Activated CD4-positive, alpha-beta memory T cell treated with anti-CD3 and anti-CD28 coated beads for 36 hours (primary cell): ENCODE measurements at regions of chr4 and their contacts with region 1.

Region 1: DNA sequence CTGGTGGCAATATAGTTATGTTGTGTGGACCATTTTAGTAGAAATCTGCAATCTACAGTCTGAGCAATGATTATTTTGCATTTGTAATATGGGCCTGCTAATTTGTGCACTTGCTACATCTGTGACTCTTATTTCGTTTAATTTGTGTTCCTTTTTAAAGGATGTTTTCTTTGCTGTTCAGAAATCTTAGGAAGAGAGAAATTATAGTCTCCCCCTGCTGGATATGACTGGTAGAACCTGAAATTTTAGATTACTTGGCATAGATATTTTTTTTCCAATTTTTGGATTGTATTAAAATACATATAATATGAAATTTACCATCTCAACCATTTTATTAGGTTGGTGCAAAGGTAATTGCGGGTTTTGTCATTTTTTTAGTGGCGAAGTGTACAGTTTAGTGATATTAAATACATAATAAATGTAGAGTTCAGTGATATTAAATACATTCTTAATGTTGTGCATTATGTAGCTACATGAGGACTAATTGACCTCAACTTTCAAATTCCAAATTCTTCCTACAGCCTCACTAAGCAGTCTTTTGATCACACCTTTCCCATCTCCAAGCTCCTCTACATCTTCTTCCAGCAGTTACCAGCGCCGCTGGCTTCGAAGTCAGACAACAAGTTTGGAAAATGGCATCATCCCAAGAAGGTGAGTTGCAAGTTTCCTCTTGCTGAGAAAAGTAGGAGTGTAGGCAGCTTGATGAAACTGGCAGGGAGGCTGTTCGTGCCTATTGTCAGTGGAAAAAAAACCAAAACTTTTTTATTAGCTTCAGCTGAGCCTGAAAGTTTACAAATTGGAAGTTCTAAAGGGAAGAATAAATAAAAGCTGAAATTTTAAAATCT is 82.2 kb downstream of the FNIP2 start:
- DNase-seq: no peak
- H3K4me3 Mint-ChIP-seq: no peak overlapping the region
- H3K27ac Mint-ChIP-seq: no peak overlapping the region
- H3K4me1 Mint-ChIP-seq: peaks cover 18% of the 10 kb centered on the region
- H3K27me3 Mint-ChIP-seq: no peaks in the 10 kb centered on the region

Region 2: DNA sequence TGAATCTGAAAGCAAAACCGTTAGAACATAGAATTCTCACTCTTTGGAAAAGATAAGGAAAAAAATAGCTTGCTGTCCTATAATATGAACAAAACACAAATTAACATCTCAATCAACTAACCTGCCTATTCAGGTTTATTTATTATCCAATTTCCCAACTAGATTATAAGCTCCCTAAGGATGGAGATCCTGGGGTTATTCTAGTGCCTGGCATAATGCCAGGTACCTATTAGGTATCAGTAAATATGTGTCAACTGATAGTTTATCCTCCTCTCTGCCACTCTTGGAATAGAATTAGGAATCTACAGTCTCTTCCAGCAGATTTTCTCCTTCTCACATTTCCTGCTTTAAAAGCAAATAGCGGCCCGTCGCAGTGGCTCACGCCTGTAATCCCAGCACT is 159.3 kb before region 1 on chr4:
- CTCF ChIA-PET with region 1: no interaction called
- POLR2A ChIA-PET with region 1: no interaction called
- intact Hi-C with region 1: no loop called
- DNase-seq: no peak
- H3K4me3 Mint-ChIP-seq: no peak overlapping the region
- H3K27ac Mint-ChIP-seq: no peak overlapping the region
- H3K4me1 Mint-ChIP-seq: no peaks in the 10 kb centered on the region
- H3K27me3 Mint-ChIP-seq: no peaks in the 10 kb centered on the region

Region 3: GRCh38 chr4:158837527-158838141 is 13.4 kb before region 1 on chr4:
- CTCF ChIA-PET with region 1: interaction called, 10 read pairs
- POLR2A ChIA-PET with region 1: no interaction called
- intact Hi-C with region 1: no loop called
- DNase-seq: no peak
- H3K4me3 Mint-ChIP-seq: no peak overlapping the region
- H3K27ac Mint-ChIP-seq: no peak overlapping the region
- H3K4me1 Mint-ChIP-seq: peaks cover 6% of the 10 kb centered on the region
- H3K27me3 Mint-ChIP-seq: no peaks in the 10 kb centered on the region